ENCODE measurements at regions of chr9 and their contacts with region 1.

Region 1: GRCh38 chr9:34994260-34994899 is 4.8 kb downstream of the DNAJB5 start:
- DNase-seq: peak in 4 of 10 donors; percentile 34 to 58 (median 49)

Region 2: GRCh38 chr9:34759432-34760134 is 234.8 kb before region 1 on chr9:
- intact Hi-C with region 1: loop called (anchors 5 kb)
- DNase-seq: peak in 5 of 10 donors; percentile 14 to 87 (median 38)

Measured in posterior cingulate gyrus (tissue), 11 donors.